ENCODE measurements at regions of chr9 and their contacts with region 1.

Region 1: GRCh38 chr9:13033959-13034693 is 245.4 kb downstream of the MPDZ start:
- DNase-seq: peak; percentile 56 to 97 (median 72)

Region 2: GRCh38 chr9:12884737-12885414 is 149.2 kb before region 1 on chr9:
- intact Hi-C with region 1: no loop called
- DNase-seq: no peak

Region 3: GRCh38 chr9:13088720-13089427 is 54.7 kb after region 1 on chr9:
- intact Hi-C with region 1: loop called (anchors 2 kb)
- DNase-seq: peak in 7 of 10 donors; percentile 16 to 87 (median 19)

Measured in posterior cingulate gyrus (tissue), 11 donors.